Mammary epithelial cell (primary cell): ENCODE measurements at regions of chr2 and their contacts with region 1.

Region 1: DNA sequence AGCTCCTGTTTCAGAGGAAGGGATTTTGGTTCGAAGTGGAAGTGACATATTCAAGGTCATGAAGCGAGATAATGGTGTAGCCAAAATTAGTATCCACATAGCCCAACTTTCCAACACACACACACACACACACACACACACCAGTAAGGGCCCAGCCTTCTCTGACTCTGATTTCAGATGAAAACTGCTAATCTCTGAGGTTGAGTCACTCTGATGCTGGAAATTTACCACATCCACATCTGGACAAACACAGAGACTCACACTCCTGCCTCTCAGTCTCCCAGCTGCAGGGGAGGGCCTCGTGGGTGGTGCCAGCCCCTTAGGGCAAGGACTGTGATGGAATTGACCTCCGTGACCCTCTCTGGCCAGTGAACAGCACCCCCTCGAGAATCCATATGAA is 29.0 kb upstream of the SLC35F6 start:
- DNase-seq: peak; percentile 75
- H3K4me3 ChIP-seq: no peak overlapping the region
- H3K27ac ChIP-seq: no peak overlapping the region
- H3K4me1 ChIP-seq: no peaks in the 10 kb centered on the region
- H3K27me3 ChIP-seq: no peaks in the 10 kb centered on the region
- CTCF ChIP-seq: no peak

Region 2: GRCh38 chr2:26584191-26584590 is 150.9 kb before region 1 on chr2:
- CTCF ChIA-PET with region 1: no interaction called
- dilution Hi-C with region 1: no loop called
- in situ Hi-C with region 1: no loop called
- intact Hi-C with region 1: no loop called
- DNase-seq: no peak
- H3K4me3 ChIP-seq: no peak overlapping the region
- H3K27ac ChIP-seq: no peak overlapping the region
- H3K4me1 ChIP-seq: no peaks in the 10 kb centered on the region
- H3K27me3 ChIP-seq: no peaks in the 10 kb centered on the region
- CTCF ChIP-seq: no peak

Region 3: GRCh38 chr2:26685989-26686839 is 48.9 kb before region 1 on chr2:
- CTCF ChIA-PET with region 1: no interaction called
- dilution Hi-C with region 1: loop called (anchors 5 kb)
- in situ Hi-C with region 1: no loop called
- intact Hi-C with region 1: no loop called
- DNase-seq: no peak
- H3K4me3 ChIP-seq: no peak overlapping the region
- H3K27ac ChIP-seq: no peak overlapping the region
- H3K4me1 ChIP-seq: peaks cover 10% of the 10 kb centered on the region
- H3K27me3 ChIP-seq: peaks cover 8% of the 10 kb centered on the region
- CTCF ChIP-seq: no peak

Region 4: DNA sequence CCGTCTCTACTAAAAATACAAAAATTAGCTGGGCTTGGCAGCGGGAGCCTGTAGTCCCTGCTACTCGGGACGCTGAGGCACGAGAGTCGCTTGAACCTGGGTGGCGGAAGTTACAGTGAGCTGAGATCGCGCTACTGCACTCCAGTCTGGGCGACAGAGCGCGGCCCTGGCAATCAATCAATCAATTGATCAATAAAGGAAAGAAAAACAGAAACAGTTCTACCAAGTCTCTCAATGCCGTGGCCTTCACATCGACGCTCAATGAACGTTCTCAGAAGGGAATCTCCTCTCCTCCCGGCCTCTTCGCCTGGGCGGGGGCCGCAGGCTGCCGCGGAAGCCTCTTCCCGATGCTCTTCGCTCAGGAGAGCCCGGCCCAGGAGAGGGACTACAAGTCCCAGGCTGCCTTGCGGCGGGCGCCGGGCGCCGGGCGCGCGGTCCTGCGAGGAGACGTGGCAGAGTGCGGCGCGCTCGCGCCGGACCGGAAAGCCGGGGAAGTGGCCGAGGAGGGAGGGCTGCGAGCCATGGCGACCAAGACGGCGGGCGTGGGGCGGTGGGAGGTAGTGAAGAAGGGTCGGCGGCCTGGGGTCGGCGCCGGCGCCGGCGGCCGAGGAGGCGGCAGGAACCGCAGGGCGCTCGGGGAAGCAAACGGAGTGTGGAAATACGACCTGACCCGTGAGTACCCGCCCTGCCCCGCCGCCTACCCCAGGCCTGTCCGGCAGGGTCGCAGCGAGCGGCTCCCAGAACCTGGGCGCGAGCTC is 297.6 kb after region 1 on chr2 and contains the start of gene TMEM214:
- CTCF ChIA-PET with region 1: no interaction called
- dilution Hi-C with region 1: no loop called
- in situ Hi-C with region 1: no loop called
- intact Hi-C with region 1: no loop called
- DNase-seq: peak; percentile 80
- H3K4me3 ChIP-seq: peak within 1 kb of the TSS; percentile 70 to 100 (median 96)
- H3K27ac ChIP-seq: peak within 1 kb of the TSS; percentile 71
- H3K4me1 ChIP-seq: peaks cover 11% of the 10 kb centered on the region
- H3K27me3 ChIP-seq: no peaks in the 10 kb centered on the region
- CTCF ChIP-seq: no peak
- total RNA-seq, gene TMEM214: 27.3 to 90.7 TPM

Region 5: GRCh38 chr2:27102329-27102728 is 367.2 kb after region 1 on chr2:
- CTCF ChIA-PET with region 1: no interaction called
- dilution Hi-C with region 1: no loop called
- in situ Hi-C with region 1: no loop called
- intact Hi-C with region 1: no loop called
- DNase-seq: no peak
- H3K4me3 ChIP-seq: no peak overlapping the region
- H3K27ac ChIP-seq: no peak overlapping the region
- H3K4me1 ChIP-seq: no peaks in the 10 kb centered on the region
- H3K27me3 ChIP-seq: no peaks in the 10 kb centered on the region
- CTCF ChIP-seq: no peak